ENCODE measurements at regions of chr9 and their contacts with region 1.

Region 1: DNA sequence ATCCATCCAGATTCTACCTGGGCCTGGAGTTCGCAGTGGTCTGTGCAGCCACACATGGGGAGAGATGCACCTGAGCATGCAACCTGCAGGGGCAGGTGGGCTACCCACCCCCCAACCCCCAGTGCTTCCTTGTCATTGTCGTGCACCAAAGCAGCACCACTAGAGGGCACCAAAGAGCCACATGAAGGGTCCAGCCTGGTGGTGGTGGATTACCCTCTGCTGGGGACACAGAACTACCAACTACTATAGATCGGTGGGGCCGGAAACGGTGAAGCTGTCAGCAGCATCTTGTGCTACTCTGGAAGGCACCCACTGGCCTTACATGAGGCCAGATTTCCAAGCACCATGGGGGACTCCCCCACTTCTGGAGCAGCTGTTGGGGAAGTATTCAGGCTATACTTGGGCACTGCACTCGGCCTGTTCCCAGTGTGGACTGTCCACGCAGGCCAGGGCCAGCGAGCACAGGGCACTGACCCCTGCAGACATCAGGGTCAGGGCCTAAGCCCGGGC is 60.2 kb upstream of the TBC1D2 start:
- DNase-seq: peak; percentile 80 to 95
- ATAC-seq: peak; percentile 92 to 99
- H3K4me3 ChIP-seq: no peak overlapping the region
- H3K27ac ChIP-seq: no peak overlapping the region
- H3K4me1 ChIP-seq: 0 out of 3 replicates have a peak, but pooled peaks cover 2% of the 10 kb centered on the region
- CTCF ChIP-seq: peak; percentile 92
- EP300 ChIP-seq: no peak
- POLR2A ChIP-seq: no peak
- RAD21 ChIP-seq: peak; percentile 96

Region 2: DNA sequence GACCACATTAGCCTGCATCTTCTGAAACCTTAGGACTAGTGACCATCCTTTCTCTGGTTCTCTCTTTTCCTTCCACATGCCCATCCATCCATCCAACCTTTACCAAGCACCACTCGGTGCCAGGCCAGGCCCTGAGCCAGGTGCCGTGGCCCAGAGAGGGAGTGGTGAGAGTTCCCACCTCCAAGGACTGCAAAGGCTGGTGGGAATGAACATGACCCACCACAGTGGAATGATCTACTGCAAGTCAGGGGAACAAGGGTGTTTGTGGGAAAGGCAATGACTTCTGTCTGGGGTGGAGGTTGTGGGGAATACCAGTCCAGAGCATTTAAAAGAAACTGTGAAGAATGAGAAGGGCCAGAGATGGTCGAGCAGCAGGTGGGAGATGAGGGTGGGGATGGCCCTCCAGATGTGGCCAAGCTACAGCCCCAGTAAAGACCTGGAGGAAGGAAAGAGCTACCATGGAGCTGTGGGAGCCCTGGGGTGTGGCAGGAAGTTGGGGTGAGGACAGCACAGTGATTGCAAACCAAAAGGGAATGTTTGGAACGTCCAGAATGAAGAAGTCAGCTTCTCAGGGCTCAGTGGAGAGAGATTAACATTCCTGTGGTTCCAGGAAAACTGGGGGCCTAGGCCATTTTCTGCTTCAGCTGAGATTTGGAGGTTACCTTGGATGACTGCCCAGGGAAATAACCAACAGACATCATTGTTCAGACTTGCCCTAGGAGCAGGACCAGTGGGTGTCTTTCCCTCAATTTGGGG is 92.5 kb before region 1 on chr9:
- CTCF ChIA-PET with region 1: no interaction called
- POLR2A ChIA-PET with region 1: no interaction called
- DNase-seq: peak; percentile 72 to 79
- ATAC-seq: peak; percentile 76 to 88
- H3K4me3 ChIP-seq: no peak overlapping the region
- H3K27ac ChIP-seq: peak overlapping the region; percentile 82 to 86
- H3K4me1 ChIP-seq: peaks cover 75% of the 10 kb centered on the region
- CTCF ChIP-seq: no peak
- EP300 ChIP-seq: peak in 1 of 2 experiments; percentile 61; a peak in 1 of 5 replicates
- POLR2A ChIP-seq: no peak
- RAD21 ChIP-seq: peak in 1 of 2 experiments; percentile 7; a peak in 1 of 5 replicates

Region 3: DNA sequence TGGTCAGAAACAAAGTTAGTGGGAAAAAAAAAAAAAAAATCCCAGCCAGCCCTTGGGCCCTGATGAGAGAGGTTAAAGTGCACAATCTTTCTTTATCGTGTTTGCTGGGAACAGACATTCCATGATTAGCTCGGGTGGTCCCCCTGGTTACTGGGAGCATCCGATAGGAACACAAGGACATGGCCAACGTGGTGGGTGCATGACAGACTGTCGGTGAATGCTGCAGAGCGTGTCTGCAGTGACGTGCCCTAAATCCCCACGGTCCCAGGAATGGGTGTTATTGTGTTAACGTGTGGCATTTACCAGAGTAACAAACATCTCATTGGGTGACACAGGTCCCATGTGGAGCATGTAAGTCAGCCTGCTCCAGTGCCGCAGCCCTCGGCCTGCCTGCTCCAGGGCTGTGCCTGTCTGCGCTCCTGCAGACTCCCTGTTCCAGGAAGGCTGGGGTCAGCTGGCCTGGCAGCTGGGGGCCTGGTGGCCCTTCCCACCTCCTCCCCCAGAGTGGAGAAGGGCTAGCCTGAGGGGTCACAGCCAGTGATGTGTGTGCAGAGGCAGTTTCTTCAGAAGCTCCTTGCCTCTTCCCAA is 25.9 kb before region 1 on chr9:
- CTCF ChIA-PET with region 1: interaction called, 21 read pairs
- POLR2A ChIA-PET with region 1: no interaction called
- DNase-seq: no peak
- ATAC-seq: peak in 1 of 2 experiments; percentile 22; a peak in 1 of 6 replicates
- H3K4me3 ChIP-seq: no peak overlapping the region
- H3K27ac ChIP-seq: no peak overlapping the region
- H3K4me1 ChIP-seq: no peaks in the 10 kb centered on the region
- CTCF ChIP-seq: no peak
- EP300 ChIP-seq: no peak
- POLR2A ChIP-seq: no peak
- RAD21 ChIP-seq: no peak

Region 4: DNA sequence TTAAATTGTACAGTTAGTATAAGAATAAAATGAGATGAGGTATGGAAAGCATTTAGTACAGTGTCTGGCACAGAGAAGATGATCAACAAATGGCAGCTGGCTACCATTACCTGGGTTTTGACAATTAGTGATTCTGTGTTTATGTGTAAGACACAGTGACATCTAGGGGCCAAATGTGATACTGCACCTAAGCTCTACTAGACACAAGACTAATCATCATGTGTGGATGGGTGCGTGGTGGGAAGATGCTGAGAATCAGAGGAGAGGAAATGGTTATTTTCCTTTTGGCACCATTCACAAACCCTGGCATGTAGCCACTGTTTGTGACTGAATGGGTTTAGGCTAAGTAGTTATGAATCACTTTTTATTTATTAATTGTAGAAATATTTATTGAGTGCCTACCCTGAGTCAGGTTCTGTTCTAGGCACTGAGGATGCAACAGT is 49.6 kb after region 1 on chr9:
- CTCF ChIA-PET with region 1: interaction called, 11 read pairs
- POLR2A ChIA-PET with region 1: no interaction called
- DNase-seq: peak in 1 of 2 experiments; percentile 61
- ATAC-seq: no peak
- H3K4me3 ChIP-seq: no peak overlapping the region
- H3K27ac ChIP-seq: no peak overlapping the region
- H3K4me1 ChIP-seq: no peaks in the 10 kb centered on the region
- CTCF ChIP-seq: no peak; the same call in 2 of the 3 replicates
- EP300 ChIP-seq: no peak
- POLR2A ChIP-seq: no peak
- RAD21 ChIP-seq: peak in 1 of 2 experiments; percentile 20; a peak in 1 of 5 replicates

Region 5: GRCh38 chr9:98484152-98484551 is 168.5 kb after region 1 on chr9:
- CTCF ChIA-PET with region 1: interaction called, 11 read pairs
- POLR2A ChIA-PET with region 1: no interaction called
- DNase-seq: peak in 1 of 2 experiments; percentile 12
- ATAC-seq: peak in 1 of 2 experiments; percentile 18; a peak in 1 of 6 replicates
- H3K4me3 ChIP-seq: no peak overlapping the region
- H3K27ac ChIP-seq: no peak overlapping the region
- H3K4me1 ChIP-seq: peaks cover 36% of the 10 kb centered on the region
- CTCF ChIP-seq: no peak
- EP300 ChIP-seq: no peak
- POLR2A ChIP-seq: no peak
- RAD21 ChIP-seq: no peak

Region 6: DNA sequence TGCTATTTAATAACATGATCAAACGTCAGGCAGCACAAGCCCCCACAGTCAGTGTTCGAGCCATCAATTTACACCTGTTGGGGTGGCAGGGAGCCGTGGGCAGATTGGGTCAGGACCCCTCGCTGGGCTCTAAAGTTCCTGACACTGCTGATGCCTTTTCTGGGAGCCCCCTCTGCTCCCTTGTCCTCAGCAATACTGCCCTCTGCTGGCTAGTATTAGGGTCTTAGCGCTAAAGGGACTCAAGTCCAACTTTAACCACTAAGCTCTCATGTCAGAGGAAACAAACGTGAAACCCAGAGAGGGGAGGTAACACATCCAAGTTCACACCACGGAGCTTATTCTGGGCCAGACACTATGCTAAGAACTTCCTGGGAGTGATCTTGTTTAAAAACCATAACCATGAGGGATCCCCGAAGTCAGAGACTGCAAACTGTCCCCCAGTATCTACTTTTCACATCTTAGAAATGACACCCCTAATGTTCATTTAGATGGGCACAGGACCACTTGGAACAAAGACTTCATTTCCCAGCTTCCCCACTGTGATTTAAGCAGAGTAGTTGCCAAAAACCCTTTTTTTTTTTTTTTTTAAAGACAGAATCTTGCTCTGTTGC is 460.3 kb after region 1 on chr9:
- CTCF ChIA-PET with region 1: interaction called, 164 read pairs
- POLR2A ChIA-PET with region 1: no interaction called
- DNase-seq: peak; percentile 74 to 80
- ATAC-seq: peak; percentile 68 to 90
- H3K4me3 ChIP-seq: no peak overlapping the region
- H3K27ac ChIP-seq: no peak overlapping the region
- H3K4me1 ChIP-seq: peaks cover 17% of the 10 kb centered on the region
- CTCF ChIP-seq: peak; percentile 75
- EP300 ChIP-seq: no peak
- POLR2A ChIP-seq: no peak
- RAD21 ChIP-seq: peak; percentile 75 to 83

Region 7: DNA sequence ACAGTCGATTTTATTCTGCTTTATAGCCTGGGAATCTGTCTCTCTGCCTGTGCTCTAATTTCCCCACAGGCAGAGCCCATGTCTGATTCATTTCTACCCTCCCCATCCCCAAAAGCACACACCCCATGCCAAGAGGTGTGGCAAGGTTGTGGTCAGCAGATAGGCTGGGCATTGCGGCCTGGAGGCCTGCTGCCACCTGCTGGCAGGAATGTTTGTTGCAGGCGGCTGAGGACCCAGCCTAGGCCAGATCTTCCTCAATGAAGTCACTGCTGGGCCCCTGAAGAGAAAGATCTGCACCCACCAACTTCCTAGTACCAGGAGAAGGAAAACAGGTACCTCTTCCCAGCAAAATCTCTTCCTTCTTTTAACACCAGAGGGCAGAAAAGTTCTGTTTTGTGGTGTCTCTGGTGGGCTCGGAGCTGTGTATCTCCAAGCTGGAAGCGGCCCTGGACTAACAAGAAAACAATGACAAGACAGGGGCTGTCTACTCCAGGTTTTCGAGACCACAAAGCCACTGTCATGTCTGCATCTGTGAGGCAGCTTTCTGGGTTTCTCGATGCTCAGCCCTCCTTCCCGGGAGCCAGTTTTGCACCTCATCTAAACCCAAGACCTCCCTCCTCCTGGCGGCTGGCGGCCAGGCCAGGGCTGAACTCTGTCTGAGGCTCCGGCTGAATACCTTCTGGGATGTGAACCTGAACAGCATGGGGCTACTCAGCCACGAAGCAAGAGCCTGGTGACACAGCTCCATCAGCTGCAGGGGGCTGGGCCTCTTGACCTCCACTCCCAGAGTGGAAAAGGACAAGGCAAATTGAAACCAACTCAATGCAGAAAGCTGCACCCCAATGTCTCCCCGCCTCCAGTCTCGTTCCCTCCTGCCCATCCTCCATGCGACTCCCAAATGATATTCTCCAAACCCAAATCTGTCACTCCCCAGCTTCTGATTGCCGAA is 475.8 kb after region 1 on chr9:
- CTCF ChIA-PET with region 1: interaction called, 18 read pairs
- POLR2A ChIA-PET with region 1: no interaction called
- DNase-seq: peak; percentile 77 to 81
- ATAC-seq: peak; percentile 66 to 95
- H3K4me3 ChIP-seq: no peak overlapping the region
- H3K27ac ChIP-seq: peak overlapping the region in 1 of 2 experiments; percentile 53; a peak in 2 of 6 replicates
- H3K4me1 ChIP-seq: peaks cover 24% of the 10 kb centered on the region
- CTCF ChIP-seq: peak; percentile 95
- EP300 ChIP-seq: no peak
- POLR2A ChIP-seq: no peak
- RAD21 ChIP-seq: peak; percentile 65 to 70

Measured in A549 (cell line).